ENCODE measurements at regions of chr6 and their contacts with region 1.

Region 1: DNA sequence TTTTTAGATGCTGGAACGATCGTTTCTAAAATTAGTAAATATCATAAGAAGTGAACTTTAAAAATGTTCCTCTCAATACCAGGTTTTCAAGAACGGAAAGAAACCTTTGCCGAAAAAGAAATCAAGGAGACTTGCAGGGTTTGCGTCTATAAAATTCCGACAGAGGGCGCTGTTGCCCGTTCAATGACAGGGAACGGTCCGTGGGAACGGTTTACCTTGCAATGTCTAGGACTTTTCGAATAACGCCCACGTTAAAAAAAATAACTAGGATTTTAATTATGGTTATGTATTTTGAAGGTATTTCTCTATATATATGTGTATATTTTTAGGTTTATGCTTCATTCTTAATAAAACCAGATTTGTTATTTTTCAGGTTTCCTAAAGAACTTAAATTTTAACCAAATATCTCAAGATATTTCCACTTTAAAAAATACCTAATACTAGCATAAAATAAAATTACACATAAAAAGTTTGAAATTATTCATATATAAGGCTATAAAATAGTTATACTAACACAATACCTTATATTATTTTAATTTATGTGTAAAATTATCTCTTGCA is 2.5 kb upstream of the TFAP2B start:
- DNase-seq: peak; percentile 45 to 76
- ATAC-seq: peak; percentile 83

Region 2: GRCh38 chr6:52049252-52050050 is 1233.3 kb after region 1 on chr6:
- intact Hi-C with region 1: loop called in 1 of 2 experiments (anchors 10 kb)
- DNase-seq: no peak
- ATAC-seq: peak; percentile 29

Measured in left colon (tissue), 2 donors.